ENCODE measurements at regions of chr17 and their contacts with region 1.

Region 1: GRCh38 chr17:32444308-32445073 is at the start of gene PSMD11:
- DNase-seq: peak; percentile 98
- H3K4me3 Mint-ChIP-seq: peak within 1 kb of the TSS; percentile 91
- H3K27ac Mint-ChIP-seq: peak within 1 kb of the TSS; percentile 78
- H3K4me1 Mint-ChIP-seq: peaks cover 39% of the 10 kb centered on the region
- H3K27me3 Mint-ChIP-seq: peaks cover 5% of the 10 kb centered on the region
- total RNA-seq, gene PSMD11: 200 and 207 TPM in 2 replicates

Region 2: GRCh38 chr17:32253117-32253611 is 191.3 kb before region 1 on chr17:
- intact Hi-C with region 1: loop called (anchors 10 kb)
- DNase-seq: peak; percentile 66
- H3K4me3 Mint-ChIP-seq: no peak overlapping the region
- H3K27ac Mint-ChIP-seq: no peak overlapping the region
- H3K4me1 Mint-ChIP-seq: peaks cover 4% of the 10 kb centered on the region
- H3K27me3 Mint-ChIP-seq: peaks cover 43% of the 10 kb centered on the region

Region 3: GRCh38 chr17:32349854-32350665 is 94.4 kb before region 1 on chr17 and contains the start of gene ZNF207:
- intact Hi-C with region 1: loop called (anchors 1 kb)
- DNase-seq: peak; percentile 95
- H3K4me3 Mint-ChIP-seq: peak within 1 kb of the TSS; percentile 92
- H3K27ac Mint-ChIP-seq: peak within 1 kb of the TSS; percentile 99
- H3K4me1 Mint-ChIP-seq: peaks cover 25% of the 10 kb centered on the region
- H3K27me3 Mint-ChIP-seq: no peaks in the 10 kb centered on the region
- total RNA-seq, gene ZNF207: 254 and 256 TPM in 2 replicates

Region 4: GRCh38 chr17:32461853-32462617 is 17.5 kb after region 1 on chr17:
- intact Hi-C with region 1: loop called (anchors 1 kb)
- DNase-seq: peak; percentile 43
- H3K4me3 Mint-ChIP-seq: no peak overlapping the region
- H3K27ac Mint-ChIP-seq: no peak overlapping the region
- H3K4me1 Mint-ChIP-seq: peaks cover 20% of the 10 kb centered on the region
- H3K27me3 Mint-ChIP-seq: no peaks in the 10 kb centered on the region

Measured in activated T-helper 2 cell treated with anti-CD3 and anti-CD28 coated beads, Interferon-gamma antibody, Interleukin-2, Interleukin-4, amounts not matched to agents 10 μg/mL and 5 μg/mL and 100 μg/mL, durations not matched to agents 14 hours and 24 hours and 36 hours (primary cell).